ENCODE measurements at regions of chr15 and their contacts with region 1.

Region 1: DNA sequence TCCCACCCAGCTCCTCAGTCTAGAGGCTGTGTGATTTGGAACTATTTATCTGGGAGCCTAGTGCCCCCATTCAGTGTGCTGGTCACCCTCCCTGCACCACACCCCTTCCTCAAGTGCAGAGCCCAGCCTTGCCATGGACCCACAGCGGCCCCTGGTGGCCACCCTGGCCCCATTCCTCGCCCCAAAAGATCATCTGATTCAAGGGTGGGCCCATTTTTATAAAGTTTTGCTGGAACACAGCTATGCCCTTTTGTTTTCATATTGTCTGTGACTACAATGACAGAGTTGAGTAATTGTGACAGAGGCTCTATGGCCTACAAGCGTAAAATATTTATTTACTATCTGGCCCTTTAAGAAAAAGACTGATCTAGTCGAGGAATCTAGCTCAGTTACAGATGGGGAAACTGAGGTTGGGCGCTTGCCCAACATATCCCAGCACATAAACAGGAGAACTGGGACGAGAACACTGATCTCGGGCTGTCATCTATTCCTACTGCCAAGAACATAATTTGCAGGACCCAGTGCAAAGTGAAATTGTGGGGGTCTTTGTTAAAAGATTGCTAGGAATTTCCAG is 1.8 kb downstream of the FES start:
- DNase-seq: peak in 1 of 2 experiments; percentile 66
- H3K4me3 ChIP-seq: no peak overlapping the region
- H3K27ac ChIP-seq: no peak overlapping the region
- H3K4me1 ChIP-seq: no peaks in the 10 kb centered on the region
- H3K27me3 ChIP-seq: no peaks in the 10 kb centered on the region
- CTCF ChIP-seq: peak; percentile 98

Region 2: GRCh38 chr15:90143166-90143655 is 742.9 kb before region 1 on chr15:
- CTCF ChIA-PET with region 1: interaction called, 26 read pairs
- POLR2A ChIA-PET with region 1: no interaction called
- intact Hi-C with region 1: loop called (anchors 1 kb)
- DNase-seq: peak; percentile 61 to 79
- H3K4me3 ChIP-seq: no peak overlapping the region
- H3K27ac ChIP-seq: no peak overlapping the region
- H3K4me1 ChIP-seq: no peaks in the 10 kb centered on the region; the same call in 1 of the 2 replicates
- H3K27me3 ChIP-seq: no peaks in the 10 kb centered on the region
- CTCF ChIP-seq: peak; percentile 86

Region 3: DNA sequence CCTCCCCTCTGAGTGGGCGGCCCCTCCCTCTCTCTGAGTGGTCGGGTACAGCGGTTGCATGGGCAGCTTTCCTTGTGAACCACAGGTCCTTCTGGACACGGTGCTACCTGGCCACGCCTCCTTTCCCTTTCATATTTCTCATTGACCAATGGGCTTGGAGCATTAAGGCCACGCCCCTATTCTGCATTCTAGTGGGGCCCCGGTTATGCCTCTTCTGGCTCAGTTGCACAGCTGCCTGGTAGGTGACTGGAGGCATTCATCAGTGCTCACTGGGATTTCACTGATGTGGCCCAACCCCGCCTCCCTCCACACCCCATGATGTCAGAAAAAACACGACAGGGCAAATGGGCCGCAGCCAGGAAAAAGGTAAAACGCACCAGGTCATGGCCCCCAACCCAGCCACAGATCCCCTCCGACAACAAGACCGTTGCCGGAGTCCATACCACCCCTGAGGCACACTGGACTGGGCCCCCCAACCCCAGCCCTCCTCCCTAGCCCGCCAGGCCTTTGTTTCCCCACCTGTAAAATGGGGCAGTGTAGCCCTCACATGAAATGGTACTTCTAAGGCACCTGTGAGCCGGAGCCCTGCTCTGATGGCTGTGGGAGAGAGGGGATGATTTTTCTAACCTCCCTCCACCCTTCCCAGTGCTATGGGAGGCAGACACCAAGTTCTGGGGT is 594.3 kb before region 1 on chr15:
- CTCF ChIA-PET with region 1: interaction called, 5 read pairs
- POLR2A ChIA-PET with region 1: no interaction called
- intact Hi-C with region 1: loop called (anchors 1 kb)
- DNase-seq: peak; percentile 15 to 47
- H3K4me3 ChIP-seq: no peak overlapping the region
- H3K27ac ChIP-seq: no peak overlapping the region
- H3K4me1 ChIP-seq: peaks cover 4% of the 10 kb centered on the region; the same call in 1 of the 2 replicates
- H3K27me3 ChIP-seq: no peaks in the 10 kb centered on the region
- CTCF ChIP-seq: no peak

Region 4: DNA sequence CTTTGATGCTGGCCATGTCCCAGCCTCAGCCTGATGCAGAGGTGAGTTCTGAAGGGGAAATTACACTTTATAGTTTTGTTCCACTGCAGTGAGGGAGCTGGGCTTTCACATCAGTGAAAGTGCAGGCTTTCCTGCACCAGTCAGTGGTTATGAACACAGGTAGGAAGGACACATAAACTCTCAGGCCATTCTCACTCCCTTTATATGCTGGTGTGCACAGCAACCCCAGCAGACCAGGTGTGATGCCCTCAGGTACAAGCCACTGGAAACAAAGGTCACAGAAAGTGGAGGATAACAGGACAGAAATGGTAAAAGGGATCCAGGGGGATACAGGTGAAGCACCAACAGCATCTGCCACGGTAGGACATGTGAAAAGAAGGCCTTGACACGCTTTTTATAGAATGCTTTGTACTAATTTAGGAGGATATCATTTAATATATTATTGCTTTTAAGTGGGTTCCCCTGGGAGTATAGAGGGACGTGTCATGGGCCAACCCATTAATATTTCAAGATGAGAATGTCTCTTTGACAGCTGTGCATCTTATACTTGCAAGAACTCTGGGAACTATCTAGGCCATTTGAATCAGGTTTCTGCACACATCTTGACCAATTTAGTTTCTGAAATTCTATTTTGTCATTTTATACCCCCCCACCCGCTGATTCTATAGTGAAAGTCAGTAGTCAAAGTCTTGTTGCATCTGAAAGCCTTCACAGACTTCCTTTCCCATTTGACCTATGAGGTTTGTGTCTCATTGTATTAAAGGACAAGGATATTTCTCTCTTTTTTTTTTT is 193.9 kb before region 1 on chr15:
- CTCF ChIA-PET with region 1: no interaction called
- POLR2A ChIA-PET with region 1: no interaction called
- intact Hi-C with region 1: loop called (anchors 1 kb)
- DNase-seq: no peak
- H3K4me3 ChIP-seq: no peak overlapping the region
- H3K27ac ChIP-seq: no peak overlapping the region
- H3K4me1 ChIP-seq: no peaks in the 10 kb centered on the region
- H3K27me3 ChIP-seq: no peaks in the 10 kb centered on the region
- CTCF ChIP-seq: no peak